HepG2 (cell line): ENCODE measurements at regions of chr3 and their contacts with region 1.

Region 1: GRCh38 chr3:124032648-124033359 is 40.9 kb upstream of the ROPN1 start:
- DNase-seq: peak; percentile 51
- ATAC-seq: peak; percentile 94
- H3K4me3 ChIP-seq: peak overlapping the region; percentile 60 to 76 (median 70)
- H3K27ac ChIP-seq: no peak overlapping the region
- H3K4me1 ChIP-seq: peaks cover 6% of the 10 kb centered on the region
- H3K27me3 ChIP-seq: peaks cover 0 to 49% of the 10 kb centered on the region in 2 experiments
- CTCF ChIP-seq: peak; percentile 76
- EP300 ChIP-seq: no peak
- POLR2A ChIP-seq: no peak
- RAD21 ChIP-seq: peak; percentile 35; the same call in 1 of the 2 replicates

Region 2: DNA sequence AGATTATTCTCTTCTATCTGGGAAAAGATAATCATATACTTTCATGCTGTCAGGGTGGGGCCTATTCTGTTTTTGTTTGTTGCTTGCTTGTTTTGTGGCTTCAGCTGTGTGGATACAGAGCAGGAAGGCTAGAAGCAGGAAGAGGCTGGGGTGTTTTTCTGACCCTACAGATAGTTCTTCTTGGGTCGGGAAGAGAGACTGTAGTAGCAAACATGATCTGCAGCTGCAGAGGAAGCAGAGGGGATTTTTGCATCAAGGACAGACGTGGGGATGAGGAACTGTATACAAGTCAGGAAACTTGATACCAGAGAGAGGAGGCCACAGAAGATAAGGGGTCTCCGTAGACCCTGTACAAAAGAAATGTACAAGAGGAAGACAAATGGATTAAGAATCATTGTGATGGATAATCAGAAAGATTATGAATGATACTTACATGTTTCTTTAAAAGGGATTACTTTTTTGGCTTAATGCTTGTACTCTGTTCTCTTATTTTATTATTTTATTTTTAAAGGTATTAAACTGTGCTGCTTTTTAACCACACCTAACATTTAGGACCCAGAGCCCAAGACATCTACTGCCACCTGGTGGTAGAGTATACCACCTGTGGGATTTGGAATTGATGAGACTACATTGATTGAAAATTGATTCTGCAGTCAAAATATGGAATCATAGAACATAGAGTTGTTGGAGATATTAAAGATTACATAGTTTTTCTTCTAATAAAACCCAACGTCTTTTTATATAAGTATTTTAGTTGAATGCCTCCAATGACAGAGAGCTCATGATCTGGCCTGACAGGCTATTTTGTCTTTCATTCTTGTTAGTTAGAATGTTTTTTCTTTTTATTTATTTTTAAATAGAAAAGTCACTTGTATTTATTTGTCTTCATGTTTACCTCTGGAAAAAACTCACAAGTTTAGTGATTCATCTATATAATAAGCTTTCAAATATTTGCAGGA is 46.4 kb after region 1 on chr3:
- CTCF ChIA-PET with region 1: no interaction called
- POLR2A ChIA-PET with region 1: no interaction called
- in situ Hi-C with region 1: no loop called
- intact Hi-C with region 1: loop called (anchors 5 kb)
- DNase-seq: peak; percentile 40
- ATAC-seq: no peak
- H3K4me3 ChIP-seq: no peak overlapping the region
- H3K27ac ChIP-seq: no peak overlapping the region
- H3K4me1 ChIP-seq: no peaks in the 10 kb centered on the region
- H3K27me3 ChIP-seq: peaks cover 0 to 7% of the 10 kb centered on the region in 2 experiments; a peak in 2 of 5 replicates
- CTCF ChIP-seq: peak; percentile 60
- EP300 ChIP-seq: no peak
- POLR2A ChIP-seq: no peak
- RAD21 ChIP-seq: no peak